PC-9 (cell line): ENCODE measurements at regions of chr1 and their contacts with region 1.

Region 1: GRCh38 chr1:23585447-23586015 is 26.2 kb upstream of the ID3 start:
- DNase-seq: peak; percentile 56 to 91
- H3K4me3 ChIP-seq: no peak overlapping the region
- H3K27ac ChIP-seq: peak overlapping the region; percentile 80
- H3K4me1 ChIP-seq: peaks cover 13% of the 10 kb centered on the region
- H3K27me3 ChIP-seq: no peaks in the 10 kb centered on the region
- CTCF ChIP-seq: no peak

Region 2: GRCh38 chr1:23444104-23444533 is 141.4 kb before region 1 on chr1:
- CTCF ChIA-PET with region 1: no interaction called
- POLR2A ChIA-PET with region 1: no interaction called
- intact Hi-C with region 1: no loop called
- DNase-seq: no peak
- H3K4me3 ChIP-seq: no peak overlapping the region
- H3K27ac ChIP-seq: no peak overlapping the region
- H3K4me1 ChIP-seq: no peaks in the 10 kb centered on the region
- H3K27me3 ChIP-seq: no peaks in the 10 kb centered on the region
- CTCF ChIP-seq: no peak

Region 3: DNA sequence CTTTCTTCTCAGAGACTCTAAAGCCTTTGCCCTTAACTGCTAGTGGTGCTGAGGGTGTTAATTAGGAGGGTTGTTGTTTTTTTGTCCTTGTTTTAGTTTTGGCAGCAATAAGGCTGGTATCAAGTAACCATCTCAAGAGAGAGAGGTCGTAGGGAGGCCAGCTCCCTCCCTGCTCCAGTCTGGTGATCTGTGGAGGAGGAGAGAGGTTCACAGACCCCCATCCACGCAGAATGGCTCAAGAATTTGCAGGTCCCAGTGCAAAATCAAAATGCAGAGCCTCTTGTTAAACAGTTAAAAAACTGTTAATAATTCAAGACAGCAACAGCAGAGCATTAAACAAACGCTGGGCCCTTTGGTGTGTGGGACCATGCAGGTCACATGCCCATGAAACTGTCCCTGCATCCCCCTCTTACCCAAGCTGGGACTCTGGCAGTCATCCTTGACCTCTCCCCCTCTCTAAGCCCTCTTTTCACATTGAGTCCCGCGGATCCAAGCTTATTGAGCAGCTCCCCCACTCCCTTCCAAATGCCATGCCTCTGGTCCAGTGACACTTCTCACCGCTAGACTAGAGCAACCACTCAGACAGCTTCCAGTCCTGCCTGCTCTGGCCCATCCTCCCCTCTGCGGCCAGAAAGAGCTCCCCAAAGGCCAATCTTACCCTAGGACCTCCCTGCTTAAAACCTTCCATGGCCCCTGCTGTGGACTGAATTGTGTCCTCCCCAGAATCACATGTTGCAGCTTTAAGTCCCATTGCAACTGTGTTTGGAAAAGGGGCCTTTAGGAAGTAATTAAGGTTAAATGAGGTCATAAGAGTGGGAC is 58.4 kb after region 1 on chr1:
- CTCF ChIA-PET with region 1: no interaction called
- POLR2A ChIA-PET with region 1: no interaction called
- intact Hi-C with region 1: no loop called
- DNase-seq: no peak
- H3K4me3 ChIP-seq: no peak overlapping the region
- H3K27ac ChIP-seq: no peak overlapping the region
- H3K4me1 ChIP-seq: no peaks in the 10 kb centered on the region
- H3K27me3 ChIP-seq: no peaks in the 10 kb centered on the region
- CTCF ChIP-seq: no peak

Region 4: DNA sequence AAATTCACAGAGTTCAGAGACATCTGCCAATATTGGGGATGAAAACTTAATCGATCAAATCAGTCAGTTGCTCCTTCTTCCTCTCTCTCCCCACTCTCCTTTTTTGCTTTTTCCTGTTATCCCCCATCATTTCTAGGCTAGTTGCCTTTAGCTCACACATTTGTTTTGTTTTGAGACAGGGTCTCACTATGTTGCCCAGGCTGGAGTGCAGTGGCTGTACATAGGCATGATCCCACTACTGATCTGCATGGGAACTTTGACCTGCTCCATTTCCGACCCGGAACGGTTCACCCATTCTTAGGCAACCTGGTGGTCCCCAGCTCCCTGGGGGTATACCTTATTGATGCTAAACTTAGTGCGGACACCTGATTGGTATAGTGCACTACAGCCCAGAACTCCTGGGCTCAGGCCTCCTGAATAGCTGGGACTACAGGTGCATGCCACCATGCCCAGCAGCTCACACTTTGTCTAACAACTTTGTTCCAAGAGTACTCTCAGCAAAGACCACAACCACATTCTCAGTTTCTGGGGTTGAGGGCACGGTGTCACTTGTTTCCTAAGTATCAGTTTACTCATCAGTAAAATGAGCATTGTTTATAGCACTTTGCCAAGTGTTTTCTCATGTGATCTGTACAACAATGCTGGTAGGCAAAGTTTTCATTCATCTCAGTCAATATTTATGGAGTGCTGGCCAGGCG is 151.1 kb after region 1 on chr1:
- CTCF ChIA-PET with region 1: no interaction called
- POLR2A ChIA-PET with region 1: interaction called, 21 read pairs
- intact Hi-C with region 1: no loop called
- DNase-seq: no peak
- H3K4me3 ChIP-seq: no peak overlapping the region
- H3K27ac ChIP-seq: no peak overlapping the region
- H3K4me1 ChIP-seq: no peaks in the 10 kb centered on the region
- H3K27me3 ChIP-seq: no peaks in the 10 kb centered on the region
- CTCF ChIP-seq: no peak